ENCODE measurements at regions of chr15 and their contacts with region 1.

Region 1: DNA sequence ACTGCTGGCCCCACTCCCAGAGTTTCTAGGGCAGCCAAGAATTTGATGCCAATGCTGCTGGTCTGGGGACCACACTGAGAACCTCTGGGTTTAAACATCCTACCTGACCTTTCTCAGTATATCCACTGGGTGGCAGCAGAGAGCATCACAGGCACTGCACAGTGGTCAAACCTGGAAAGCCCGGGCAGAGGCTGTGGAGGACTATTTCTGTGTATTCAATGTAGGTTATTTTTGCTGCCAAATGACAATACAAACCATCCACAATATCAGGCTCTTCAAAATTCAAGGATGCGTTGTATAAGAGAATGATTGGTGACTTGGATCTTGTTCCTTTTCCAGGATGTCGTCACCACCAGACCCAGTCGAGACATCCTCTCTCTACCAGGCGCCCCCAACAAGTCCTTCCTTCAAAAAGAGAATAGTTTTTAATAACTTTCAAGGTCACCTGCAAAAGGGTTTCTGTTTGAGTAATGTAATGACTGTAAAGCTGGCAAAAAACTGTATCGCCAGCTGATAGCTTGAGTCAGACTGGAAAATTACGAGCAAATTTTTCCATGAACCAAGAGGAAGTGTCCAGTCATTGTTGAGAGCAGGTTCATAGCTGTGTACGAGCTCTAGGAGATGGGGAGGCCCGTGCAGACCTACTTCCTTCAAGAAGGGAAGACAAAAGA is 30.5 kb upstream of the MYZAP start:
- DNase-seq: peak; percentile 23 to 71 (median 59)
- ATAC-seq: peak; percentile 77
- H3K4me3 ChIP-seq: no peak overlapping the region
- H3K4me3 Mint-ChIP-seq: no peak overlapping the region
- H3K27ac ChIP-seq: no peak overlapping the region
- H3K27ac Mint-ChIP-seq: no peak overlapping the region
- H3K4me1 ChIP-seq: peaks cover 8% of the 10 kb centered on the region
- H3K4me1 Mint-ChIP-seq: peaks cover 27% of the 10 kb centered on the region
- H3K27me3 ChIP-seq: peaks cover 0 to 3% of the 10 kb centered on the region in 2 experiments
- H3K27me3 Mint-ChIP-seq: peaks cover 6% of the 10 kb centered on the region
- CTCF ChIP-seq: peak; percentile 86

Region 2: DNA sequence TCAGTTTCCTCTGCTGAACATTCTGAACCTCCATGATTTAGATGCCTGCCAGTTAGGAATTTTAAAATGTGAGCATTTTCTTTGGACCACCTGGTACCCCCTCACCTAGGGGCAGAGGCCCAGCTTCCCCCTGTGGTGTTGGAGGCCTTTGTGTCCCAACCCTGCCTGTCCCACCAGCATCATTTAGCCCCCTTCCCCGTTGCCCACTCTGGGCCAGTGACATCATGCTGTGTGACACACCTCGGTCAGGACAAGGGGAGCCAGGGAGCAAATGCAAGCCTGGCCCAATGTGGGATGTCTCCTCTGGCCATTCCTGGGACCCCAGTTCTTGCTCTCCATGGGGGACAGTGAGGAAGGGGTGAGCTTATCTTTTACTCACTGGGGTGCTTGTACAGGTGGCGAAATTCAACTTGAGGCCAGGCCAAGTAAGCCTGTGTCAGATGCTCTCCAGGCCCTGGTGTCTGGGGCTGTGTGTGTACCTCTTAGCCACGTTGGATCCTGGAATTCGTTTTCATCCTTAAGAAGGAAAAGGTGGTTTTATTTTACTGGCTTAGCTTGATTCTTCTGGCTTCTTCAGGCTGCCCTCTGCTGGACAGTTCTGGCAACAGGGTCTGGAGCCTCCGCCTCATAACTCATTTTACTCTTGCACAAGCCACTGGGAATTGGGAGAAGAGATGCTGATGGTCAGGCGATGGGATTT is 19.2 kb before region 1 on chr15:
- CTCF ChIA-PET with region 1: interaction called, 15 read pairs
- POLR2A ChIA-PET with region 1: no interaction called
- intact Hi-C with region 1: no loop called
- DNase-seq: peak in 4 of 9 experiments; percentile 10 to 26 (median 16)
- ATAC-seq: no peak
- H3K4me3 ChIP-seq: no peak overlapping the region
- H3K4me3 Mint-ChIP-seq: no peak overlapping the region
- H3K27ac ChIP-seq: no peak overlapping the region
- H3K27ac Mint-ChIP-seq: no peak overlapping the region
- H3K4me1 ChIP-seq: no peaks in the 10 kb centered on the region
- H3K4me1 Mint-ChIP-seq: no peaks in the 10 kb centered on the region
- H3K27me3 ChIP-seq: no peaks in the 10 kb centered on the region
- H3K27me3 Mint-ChIP-seq: no peaks in the 10 kb centered on the region
- CTCF ChIP-seq: peak; percentile 33

Region 3: GRCh38 chr15:57586661-57587424 is 25.7 kb after region 1 on chr15:
- CTCF ChIA-PET with region 1: interaction called, 11 read pairs
- POLR2A ChIA-PET with region 1: no interaction called
- intact Hi-C with region 1: no loop called
- DNase-seq: peak in 1 of 9 experiments; percentile 30
- ATAC-seq: peak; percentile 20
- H3K4me3 ChIP-seq: no peak overlapping the region
- H3K4me3 Mint-ChIP-seq: no peak overlapping the region
- H3K27ac ChIP-seq: no peak overlapping the region
- H3K27ac Mint-ChIP-seq: peak overlapping the region; percentile 6
- H3K4me1 ChIP-seq: peaks cover 7% of the 10 kb centered on the region
- H3K4me1 Mint-ChIP-seq: peaks cover 17% of the 10 kb centered on the region
- H3K27me3 ChIP-seq: peaks cover 0 to 5% of the 10 kb centered on the region in 2 experiments
- H3K27me3 Mint-ChIP-seq: peaks cover 32% of the 10 kb centered on the region
- CTCF ChIP-seq: no peak

Region 4: GRCh38 chr15:57706405-57707209 is 145.4 kb after region 1 on chr15 and contains the start of gene POLR2M:
- CTCF ChIA-PET with region 1: interaction called, 6 read pairs
- POLR2A ChIA-PET with region 1: no interaction called
- intact Hi-C with region 1: loop called in 1 of 2 experiments (anchors 10 kb)
- DNase-seq: peak; percentile 81 to 98 (median 89)
- ATAC-seq: peak; percentile 87
- H3K4me3 ChIP-seq: peak within 1 kb of the TSS; percentile 85 to 87
- H3K4me3 Mint-ChIP-seq: peak within 1 kb of the TSS; percentile 87
- H3K27ac ChIP-seq: peak within 1 kb of the TSS; percentile 89 to 98
- H3K27ac Mint-ChIP-seq: peak within 1 kb of the TSS; percentile 92
- H3K4me1 ChIP-seq: peaks cover 56% of the 10 kb centered on the region
- H3K4me1 Mint-ChIP-seq: peaks cover 74% of the 10 kb centered on the region
- H3K27me3 ChIP-seq: no peaks in the 10 kb centered on the region
- H3K27me3 Mint-ChIP-seq: no peaks in the 10 kb centered on the region
- CTCF ChIP-seq: no peak
- total RNA-seq, gene POLR2M: 96.7 to 103 TPM

Region 5: DNA sequence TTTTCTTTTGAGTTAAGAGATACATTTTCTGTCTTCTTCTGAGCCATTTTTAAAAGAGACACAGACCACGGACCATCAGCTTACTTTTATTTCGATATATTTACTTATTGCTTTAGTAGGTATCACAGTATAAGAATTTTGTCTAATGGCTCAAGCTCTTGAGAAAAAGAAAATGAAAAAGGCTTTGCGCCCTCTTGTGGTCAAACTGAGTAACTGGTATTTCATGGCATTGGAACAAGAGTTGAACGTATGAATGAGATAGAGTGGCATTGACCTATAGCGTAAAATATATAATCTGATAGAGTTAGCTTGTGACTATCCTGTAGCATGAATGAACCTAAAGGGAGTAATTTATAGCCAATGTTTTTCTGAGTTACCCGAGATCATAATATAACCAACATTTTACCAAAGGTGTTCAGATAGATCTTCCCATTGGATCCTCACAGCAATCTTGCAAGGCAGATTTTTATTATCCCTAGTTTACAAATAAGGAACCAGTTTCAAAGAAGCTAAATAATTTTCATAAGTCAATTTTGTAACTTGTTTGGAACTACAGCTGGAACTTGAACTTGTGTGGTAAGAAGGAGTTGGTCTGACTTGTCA is 300.0 kb after region 1 on chr15:
- CTCF ChIA-PET with region 1: interaction called, 30 read pairs
- POLR2A ChIA-PET with region 1: no interaction called
- intact Hi-C with region 1: loop called in 1 of 2 experiments (anchors 1 kb)
- DNase-seq: peak in 4 of 9 experiments; percentile 17 to 65 (median 37)
- ATAC-seq: no peak
- H3K4me3 ChIP-seq: no peak overlapping the region
- H3K4me3 Mint-ChIP-seq: no peak overlapping the region
- H3K27ac ChIP-seq: no peak overlapping the region
- H3K27ac Mint-ChIP-seq: no peak overlapping the region
- H3K4me1 ChIP-seq: no peaks in the 10 kb centered on the region
- H3K4me1 Mint-ChIP-seq: no peaks in the 10 kb centered on the region
- H3K27me3 ChIP-seq: no peaks in the 10 kb centered on the region
- H3K27me3 Mint-ChIP-seq: peaks cover 5% of the 10 kb centered on the region
- CTCF ChIP-seq: peak; percentile 94

Region 6: GRCh38 chr15:58182460-58183163 is 621.4 kb after region 1 on chr15:
- CTCF ChIA-PET with region 1: no interaction called
- POLR2A ChIA-PET with region 1: no interaction called
- intact Hi-C with region 1: loop called in 1 of 2 experiments (anchors 2 kb)
- DNase-seq: peak in 6 of 9 experiments; percentile 3 to 43 (median 16)
- ATAC-seq: no peak
- H3K4me3 ChIP-seq: no peak overlapping the region
- H3K4me3 Mint-ChIP-seq: no peak overlapping the region
- H3K27ac ChIP-seq: no peak overlapping the region
- H3K27ac Mint-ChIP-seq: no peak overlapping the region
- H3K4me1 ChIP-seq: no peaks in the 10 kb centered on the region
- H3K4me1 Mint-ChIP-seq: peaks cover 11% of the 10 kb centered on the region
- H3K27me3 ChIP-seq: peaks cover 4% of the 10 kb centered on the region in 2 experiments
- H3K27me3 Mint-ChIP-seq: peaks cover 29% of the 10 kb centered on the region
- CTCF ChIP-seq: peak; percentile 17